Sigmoid colon (tissue), 7 donors: ENCODE measurements at regions of chr4 and their contacts with region 1.

Region 1: DNA sequence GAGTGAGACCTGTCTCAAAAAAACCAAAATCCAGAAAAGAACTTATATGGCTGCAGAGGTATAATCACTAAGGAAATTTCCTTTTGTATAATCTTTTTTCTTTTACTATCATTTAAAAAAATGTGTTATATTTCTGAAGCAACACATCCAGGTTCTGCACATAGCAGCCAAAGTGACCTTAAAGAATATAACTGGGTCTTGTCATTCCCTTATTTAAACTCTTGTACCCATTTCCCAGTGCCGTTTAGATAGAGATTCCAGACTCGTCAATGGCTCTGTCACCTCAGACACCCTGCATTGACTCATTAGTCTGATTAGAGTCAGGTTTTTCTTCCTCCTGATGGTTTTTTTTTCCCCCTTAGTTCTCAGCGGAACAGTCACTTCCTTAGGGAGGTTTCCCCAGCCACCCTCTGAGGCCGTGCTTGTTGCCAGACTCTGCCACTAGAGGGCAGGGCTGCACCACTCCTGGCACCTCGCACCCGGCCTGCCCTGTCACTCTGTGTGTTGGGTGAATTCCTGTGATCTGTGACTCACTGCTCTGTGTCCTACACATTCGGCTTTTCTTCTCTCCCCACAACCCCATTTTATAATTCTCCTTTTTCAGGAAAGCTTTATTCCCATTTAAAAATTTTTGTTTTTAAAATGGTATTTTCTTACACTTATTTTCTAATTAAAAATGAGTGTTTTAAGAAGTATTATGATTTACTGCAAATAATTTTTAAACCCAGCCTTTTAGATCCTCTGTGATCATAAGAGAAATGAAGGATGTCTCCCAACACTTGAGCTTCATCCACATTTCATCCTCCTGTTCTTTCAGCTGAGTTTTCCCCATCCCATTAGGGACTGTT is 32.1 kb downstream of the HTT start:
- DNase-seq: peak; percentile 94
- H3K4me3 ChIP-seq: no peak overlapping the region
- H3K27ac ChIP-seq: peak overlapping the region; percentile 36 to 79 (median 56)
- H3K4me1 ChIP-seq: peaks cover 0 to 20% (median 15%) of the 10 kb centered on the region in 4 donors
- H3K27me3 ChIP-seq: no peaks in the 10 kb centered on the region
- CTCF ChIP-seq: peak; percentile 86 to 95 (median 93)
- EP300 ChIP-seq: no peak
- POLR2A ChIP-seq: no peak

Region 2: DNA sequence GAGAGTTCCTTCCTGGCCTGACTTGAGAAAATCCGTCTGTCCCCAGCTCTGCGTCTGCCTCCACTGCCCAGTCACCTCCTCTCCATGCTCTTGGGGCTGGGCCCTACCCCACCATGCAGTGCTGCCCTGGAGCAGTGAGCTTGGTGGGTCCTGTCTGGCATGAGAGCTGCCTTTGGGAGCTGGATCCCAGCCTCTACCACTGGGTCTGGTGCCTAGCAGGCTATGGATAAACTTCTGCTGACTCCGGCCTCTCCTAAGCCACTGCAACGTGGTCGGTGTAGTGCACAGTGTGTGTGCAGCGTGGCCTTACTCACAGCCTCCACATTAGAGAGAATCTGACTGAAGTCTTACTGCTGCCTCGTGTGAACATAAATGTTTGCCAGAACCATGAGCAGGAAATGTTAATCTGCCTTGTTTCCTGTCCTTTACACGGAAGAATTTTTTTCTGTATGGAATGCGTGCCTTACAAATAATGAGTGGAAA is 15.6 kb after region 1 on chr4:
- intact Hi-C with region 1: loop called (anchors 2 kb)
- DNase-seq: no peak
- H3K4me3 ChIP-seq: no peak overlapping the region
- H3K27ac ChIP-seq: peak overlapping the region; percentile 73 to 86 (median 76)
- H3K4me1 ChIP-seq: peaks cover 0 to 53% (median 38%) of the 10 kb centered on the region in 4 donors
- H3K27me3 ChIP-seq: no peaks in the 10 kb centered on the region
- CTCF ChIP-seq: no peak
- EP300 ChIP-seq: no peak
- POLR2A ChIP-seq: no peak

Region 3: GRCh38 chr4:3137908-3138307 is 31.3 kb after region 1 on chr4:
- intact Hi-C with region 1: loop called (anchors 1 kb)
- DNase-seq: no peak
- H3K4me3 ChIP-seq: no peak overlapping the region
- H3K27ac ChIP-seq: no peak overlapping the region
- H3K4me1 ChIP-seq: peaks cover 0 to 20% (median 6%) of the 10 kb centered on the region in 4 donors
- H3K27me3 ChIP-seq: no peaks in the 10 kb centered on the region
- CTCF ChIP-seq: no peak
- EP300 ChIP-seq: no peak
- POLR2A ChIP-seq: no peak

Region 4: GRCh38 chr4:3201718-3202702 is 95.4 kb after region 1 on chr4:
- intact Hi-C with region 1: loop called (anchors 2 kb)
- DNase-seq: no peak
- H3K4me3 ChIP-seq: no peak overlapping the region
- H3K27ac ChIP-seq: peak overlapping the region; percentile 1 to 80 (median 73)
- H3K4me1 ChIP-seq: peaks cover 0 to 32% (median 23%) of the 10 kb centered on the region in 4 donors
- H3K27me3 ChIP-seq: no peaks in the 10 kb centered on the region
- CTCF ChIP-seq: no peak
- EP300 ChIP-seq: no peak
- POLR2A ChIP-seq: no peak

Region 5: DNA sequence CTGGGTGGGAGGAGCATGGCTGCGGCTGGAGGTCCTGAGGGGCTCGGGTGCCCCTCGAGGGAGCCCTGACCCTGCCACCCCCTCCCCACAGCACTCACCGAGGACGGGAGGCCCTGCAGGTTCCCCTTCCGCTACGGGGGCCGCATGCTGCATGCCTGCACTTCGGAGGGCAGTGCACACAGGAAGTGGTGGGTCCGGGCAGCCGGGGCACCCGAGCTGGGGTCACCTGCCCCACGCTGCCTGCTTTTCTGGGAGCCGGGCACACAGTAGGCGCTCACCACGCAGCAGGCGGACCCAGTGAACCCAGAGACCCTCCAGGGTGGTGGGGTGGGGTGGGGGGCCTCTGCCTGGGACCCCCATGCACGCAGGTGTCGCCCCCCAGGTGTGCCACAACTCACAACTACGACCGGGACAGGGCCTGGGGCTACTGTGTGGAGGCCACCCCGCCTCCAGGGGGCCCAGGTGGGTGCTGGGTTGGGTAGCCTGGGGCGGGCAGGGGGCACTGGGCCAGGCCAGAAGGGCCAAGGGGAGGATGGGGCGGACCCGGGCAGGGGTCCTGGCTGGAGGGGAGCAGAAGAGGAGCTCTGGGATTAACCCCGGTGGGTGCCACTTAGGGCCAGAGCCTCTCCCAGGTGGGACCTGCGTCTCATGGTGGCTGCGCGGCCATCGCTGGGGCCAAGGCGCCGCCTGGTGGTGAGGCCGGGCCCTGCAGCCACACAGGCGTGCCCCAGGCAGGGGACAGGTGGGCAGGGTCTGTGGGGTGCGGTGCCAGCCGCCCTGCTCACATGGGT is 336.6 kb after region 1 on chr4:
- intact Hi-C with region 1: loop called (anchors 5 kb)
- DNase-seq: no peak
- H3K4me3 ChIP-seq: no peak overlapping the region
- H3K27ac ChIP-seq: no peak overlapping the region
- H3K4me1 ChIP-seq: peaks cover 0 to 6% (median 0%) of the 10 kb centered on the region in 4 donors
- H3K27me3 ChIP-seq: peaks cover 0 to 3% (median 0%) of the 10 kb centered on the region in 3 donors
- CTCF ChIP-seq: peak; percentile 89 to 100 (median 98)
- EP300 ChIP-seq: no peak
- POLR2A ChIP-seq: no peak